ENCODE measurements at regions of chr4 and their contacts with region 1.

Region 1: GRCh38 chr4:1726146-1726934 is 5.0 kb downstream of the TACC3 start:
- DNase-seq: no peak
- H3K4me3 ChIP-seq: no peak overlapping the region
- H3K27ac ChIP-seq: peak overlapping the region; percentile 24
- H3K4me1 ChIP-seq: peaks cover 33% of the 10 kb centered on the region
- H3K27me3 ChIP-seq: no peaks in the 10 kb centered on the region
- CTCF ChIP-seq: peak; percentile 87 to 90 (median 89)
- POLR2A ChIP-seq: no peak

Region 2: GRCh38 chr4:1579901-1580691 is 146.2 kb before region 1 on chr4:
- intact Hi-C with region 1: no loop called
- DNase-seq: peak in 1 of 2 donors; percentile 92
- H3K4me3 ChIP-seq: peak overlapping the region; percentile 63 to 64
- H3K27ac ChIP-seq: peak overlapping the region; percentile 65
- H3K4me1 ChIP-seq: peaks cover 26% of the 10 kb centered on the region
- H3K27me3 ChIP-seq: no peaks in the 10 kb centered on the region
- CTCF ChIP-seq: no peak
- POLR2A ChIP-seq: no peak

Region 3: GRCh38 chr4:1693129-1693896 is 33.0 kb before region 1 on chr4:
- intact Hi-C with region 1: loop called (anchors 2 kb)
- DNase-seq: no peak
- H3K4me3 ChIP-seq: no peak overlapping the region
- H3K27ac ChIP-seq: no peak overlapping the region
- H3K4me1 ChIP-seq: no peaks in the 10 kb centered on the region
- H3K27me3 ChIP-seq: no peaks in the 10 kb centered on the region
- CTCF ChIP-seq: peak; percentile 49 to 78 (median 74)
- POLR2A ChIP-seq: no peak

Region 4: GRCh38 chr4:2441393-2442174 is 715.2 kb after region 1 on chr4:
- intact Hi-C with region 1: no loop called
- DNase-seq: no peak
- H3K4me3 ChIP-seq: no peak overlapping the region
- H3K27ac ChIP-seq: no peak overlapping the region
- H3K4me1 ChIP-seq: no peaks in the 10 kb centered on the region
- H3K27me3 ChIP-seq: no peaks in the 10 kb centered on the region
- CTCF ChIP-seq: peak in 2 of 3 experiments; percentile 26 to 60
- POLR2A ChIP-seq: no peak

Measured in vagina (tissue), 2 donors.